ENCODE measurements at regions of chr21 and their contacts with region 1.

Region 1: GRCh38 chr21:34687065-34687464 is 18.3 kb downstream of the CLIC6 start:
- DNase-seq: no peak
- H3K4me3 ChIP-seq: no peak overlapping the region
- H3K27ac ChIP-seq: no peak overlapping the region
- H3K4me1 ChIP-seq: no peaks in the 10 kb centered on the region
- H3K27me3 ChIP-seq: peaks cover 10% of the 10 kb centered on the region
- CTCF ChIP-seq: no peak

Region 2: DNA sequence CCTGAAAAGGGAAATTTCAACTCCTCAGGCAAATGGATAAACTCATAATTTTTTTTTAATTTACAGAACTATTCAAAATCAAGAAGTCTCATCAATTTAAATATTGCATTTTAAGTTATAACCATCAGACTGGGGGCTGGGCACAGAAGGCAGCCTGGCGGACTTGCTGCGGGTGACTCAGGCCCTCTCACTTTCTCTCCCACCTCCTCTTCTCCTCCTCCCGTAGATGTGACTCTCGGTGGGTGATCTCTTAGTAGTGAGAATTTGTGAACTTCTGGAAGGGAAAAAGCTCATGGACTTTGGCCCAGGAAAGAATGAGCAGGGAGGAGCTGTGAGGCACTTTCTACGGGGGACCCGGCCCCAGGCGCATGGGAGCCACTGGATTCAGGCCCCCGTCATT is 14.7 kb after region 1 on chr21:
- CTCF ChIA-PET with region 1: interaction called, 10 read pairs
- POLR2A ChIA-PET with region 1: no interaction called
- intact Hi-C with region 1: no loop called
- DNase-seq: no peak
- H3K4me3 ChIP-seq: no peak overlapping the region
- H3K27ac ChIP-seq: no peak overlapping the region
- H3K4me1 ChIP-seq: peaks cover 10% of the 10 kb centered on the region
- H3K27me3 ChIP-seq: no peaks in the 10 kb centered on the region
- CTCF ChIP-seq: no peak